Mammary epithelial cell (primary cell): ENCODE measurements at regions of chr2 and their contacts with region 1.

Region 1: DNA sequence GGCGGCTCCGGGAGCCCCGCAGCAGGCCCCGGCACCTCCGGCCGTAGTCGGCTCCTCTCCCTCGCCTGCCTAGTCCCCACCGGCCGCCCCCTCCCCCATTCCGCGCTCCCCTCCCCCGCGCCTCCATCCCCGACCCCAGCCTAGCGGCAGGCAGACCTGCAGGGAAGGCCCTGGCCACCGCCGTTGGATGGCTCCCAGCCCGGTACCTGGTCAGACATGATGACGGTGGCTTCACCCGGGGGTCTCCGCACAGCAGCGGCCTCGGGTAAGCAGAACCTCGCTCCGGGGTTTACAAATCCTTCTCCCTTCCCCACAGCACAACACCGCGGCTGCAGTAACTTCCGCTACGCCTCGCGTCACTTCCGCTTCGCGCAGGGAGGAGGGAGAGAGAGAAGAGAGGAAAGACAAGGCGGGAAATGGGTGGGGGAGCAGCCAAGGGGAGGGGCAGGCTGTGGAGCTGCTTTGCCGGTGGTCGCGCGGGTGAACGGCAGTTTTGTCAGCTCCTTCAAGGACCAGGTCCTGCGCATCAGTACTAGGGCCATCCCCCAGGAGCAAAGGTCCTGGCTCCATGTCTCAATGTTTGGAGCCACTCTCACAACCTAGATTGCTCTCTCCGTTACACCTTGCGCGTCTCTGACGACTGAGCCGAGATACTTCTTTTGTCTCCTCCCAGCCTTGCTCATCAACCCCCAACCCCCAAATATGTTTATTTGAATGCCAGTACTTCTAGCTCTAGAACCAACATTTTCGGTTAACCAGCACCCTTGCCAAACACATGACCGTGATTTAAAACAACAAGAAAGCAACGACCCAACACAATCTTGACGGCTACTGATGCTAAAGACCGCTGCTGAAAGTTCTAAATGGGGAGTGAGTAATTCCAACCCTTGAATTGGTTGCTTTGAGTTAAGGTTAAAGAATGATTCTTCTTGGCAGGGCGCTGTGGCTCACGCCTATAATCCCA is at the start of gene SUMO1:
- DNase-seq: peak; percentile 85
- H3K4me3 ChIP-seq: peak within 1 kb of the TSS; percentile 85 to 97 (median 93)
- H3K27ac ChIP-seq: peak within 1 kb of the TSS; percentile 82
- H3K4me1 ChIP-seq: no peaks in the 10 kb centered on the region
- H3K27me3 ChIP-seq: no peaks in the 10 kb centered on the region
- CTCF ChIP-seq: no peak
- total RNA-seq, gene SUMO1: 95.5 to 98.1 TPM

Region 2: DNA sequence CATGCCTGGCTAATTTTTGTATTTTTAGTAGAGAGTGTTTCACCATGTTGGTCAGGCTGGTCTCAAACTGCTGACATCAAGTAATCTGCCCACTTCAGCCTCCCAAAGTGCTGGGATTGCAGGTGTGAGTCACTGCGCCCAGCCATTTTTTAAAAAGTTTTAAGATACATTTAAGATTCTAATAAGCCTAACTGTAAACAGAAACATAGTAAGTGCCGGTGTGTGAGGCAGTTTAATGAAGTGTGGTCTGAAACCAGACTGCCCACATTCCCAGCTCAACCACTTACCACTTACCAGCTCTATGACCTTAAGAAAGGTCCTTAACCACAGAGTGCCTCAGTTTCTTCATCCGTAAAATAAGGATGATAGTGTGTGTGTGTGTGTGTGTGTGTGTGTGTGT is 637.6 kb before region 1 on chr2:
- CTCF ChIA-PET with region 1: no interaction called
- dilution Hi-C with region 1: no loop called
- in situ Hi-C with region 1: no loop called
- intact Hi-C with region 1: no loop called
- DNase-seq: peak; percentile 5
- H3K4me3 ChIP-seq: no peak overlapping the region
- H3K27ac ChIP-seq: no peak overlapping the region
- H3K4me1 ChIP-seq: no peaks in the 10 kb centered on the region
- H3K27me3 ChIP-seq: peaks cover 8% of the 10 kb centered on the region
- CTCF ChIP-seq: no peak

Region 3: DNA sequence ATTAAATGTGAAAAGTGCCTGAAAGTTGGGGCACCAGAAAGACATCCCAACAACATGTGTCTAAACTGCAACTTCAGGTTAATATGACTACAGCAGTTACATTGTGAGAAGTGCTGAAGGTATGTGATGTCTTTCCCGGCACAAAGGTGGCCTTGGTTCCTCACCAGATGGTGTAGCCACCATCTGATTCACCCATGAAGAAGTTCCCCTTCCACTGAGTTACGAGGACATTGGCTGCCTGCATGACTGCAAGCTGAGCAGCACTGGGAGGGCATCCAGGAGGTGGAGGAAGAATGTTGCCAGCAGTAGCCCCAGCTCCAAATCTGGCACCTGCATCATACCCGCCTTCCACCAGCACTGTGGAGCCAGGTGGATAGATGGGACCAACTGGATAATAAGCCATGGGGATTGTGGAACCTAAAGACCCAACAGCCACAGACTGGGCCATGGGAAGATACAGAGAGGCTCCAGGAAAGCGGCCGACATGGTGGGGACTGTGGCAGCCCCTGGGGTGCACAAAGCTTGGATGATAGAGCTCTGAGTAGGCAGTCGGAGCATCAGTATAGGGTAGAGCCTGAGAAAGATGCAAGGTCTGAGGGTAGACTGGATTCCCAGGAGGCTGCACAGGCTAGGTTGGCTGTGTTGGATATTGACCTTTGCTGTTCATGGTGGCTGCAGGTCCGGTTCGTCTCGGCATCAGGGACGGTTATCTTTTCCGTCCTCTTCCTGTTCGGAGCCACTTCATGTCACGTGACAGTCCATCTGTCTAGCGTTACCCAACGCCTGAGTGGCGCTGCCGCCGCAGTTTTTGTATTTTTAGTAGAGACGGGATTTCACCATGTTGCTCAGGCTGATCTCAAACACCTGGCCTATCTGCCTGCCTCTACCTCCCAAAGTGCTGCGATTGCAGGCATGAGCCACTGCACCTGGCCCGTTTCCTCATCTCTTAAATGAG is 37.0 kb before region 1 on chr2:
- CTCF ChIA-PET with region 1: no interaction called
- dilution Hi-C with region 1: loop called (anchors 5 kb)
- in situ Hi-C with region 1: no loop called
- intact Hi-C with region 1: no loop called
- DNase-seq: no peak
- H3K4me3 ChIP-seq: no peak overlapping the region
- H3K27ac ChIP-seq: no peak overlapping the region
- H3K4me1 ChIP-seq: no peaks in the 10 kb centered on the region
- H3K27me3 ChIP-seq: no peaks in the 10 kb centered on the region
- CTCF ChIP-seq: no peak

Region 4: DNA sequence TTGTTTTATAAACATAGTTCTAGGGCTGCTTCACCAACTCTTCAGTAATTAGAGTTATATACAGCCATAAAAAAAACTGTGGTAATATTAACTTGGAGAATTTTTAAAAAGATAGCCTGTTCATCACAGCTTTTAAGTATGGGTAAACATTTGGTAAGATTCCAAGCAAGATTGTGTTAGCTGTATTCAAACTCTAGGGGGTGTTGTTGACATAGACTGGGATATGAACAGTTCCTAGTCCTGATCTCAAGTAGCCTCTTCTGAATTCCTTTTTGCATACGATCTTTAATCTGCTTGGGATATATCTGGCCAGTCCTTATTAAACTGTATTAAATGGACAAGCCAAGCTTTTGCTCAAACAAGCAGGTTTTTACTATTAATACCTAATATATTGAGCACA is 40.4 kb after region 1 on chr2:
- CTCF ChIA-PET with region 1: no interaction called
- dilution Hi-C with region 1: no loop called
- in situ Hi-C with region 1: no loop called
- intact Hi-C with region 1: loop called (anchors 2 kb)
- DNase-seq: peak; percentile 41
- H3K4me3 ChIP-seq: no peak overlapping the region
- H3K27ac ChIP-seq: peak overlapping the region; percentile 75
- H3K4me1 ChIP-seq: peaks cover 28% of the 10 kb centered on the region
- H3K27me3 ChIP-seq: no peaks in the 10 kb centered on the region
- CTCF ChIP-seq: peak; percentile 52 to 66